ENCODE measurements at regions of chr18 and their contacts with region 1.

Region 1: DNA sequence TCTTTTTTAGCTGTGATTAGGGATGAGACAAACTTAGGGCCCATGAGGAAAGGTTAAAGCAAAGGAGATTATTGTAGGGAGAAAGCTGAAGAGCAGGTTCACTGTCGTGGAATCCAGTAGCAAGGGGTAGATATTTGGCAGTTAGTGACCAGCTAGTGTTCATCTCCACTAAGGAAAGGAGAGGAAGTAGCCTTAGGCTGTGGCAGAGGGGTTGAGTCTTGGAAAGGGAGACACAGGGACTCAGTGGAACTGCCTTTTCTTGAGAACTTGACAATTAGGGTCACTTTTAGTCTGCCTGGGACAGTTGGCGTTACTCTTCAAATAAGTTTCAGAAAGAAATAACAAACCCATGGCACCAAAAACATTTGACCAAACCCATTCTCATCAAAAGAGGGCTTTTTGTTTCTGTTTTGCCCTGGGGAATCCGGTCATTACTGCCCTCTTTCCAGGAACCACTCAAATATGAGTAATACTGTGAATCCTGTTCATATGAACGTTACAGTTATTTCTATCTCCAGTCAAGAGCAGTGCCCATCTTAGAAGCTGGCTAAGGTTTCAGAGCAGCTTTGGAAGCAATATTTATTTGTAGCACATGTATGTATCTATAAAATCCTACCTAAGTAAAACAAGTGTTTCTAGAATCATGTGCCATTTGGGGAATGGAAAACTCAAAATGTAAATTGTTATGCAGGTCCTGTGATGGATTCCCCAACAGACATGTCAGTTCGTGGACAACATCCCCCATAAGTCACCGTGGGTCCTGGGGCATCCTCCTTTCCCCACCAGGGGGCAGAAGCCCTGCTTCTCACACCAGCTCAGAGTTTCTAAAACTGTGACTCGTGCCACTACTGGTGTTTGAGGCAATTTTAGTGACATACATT is 77.3 kb upstream of the PHLPP1 start:
- DNase-seq: peak; percentile 60
- ATAC-seq: peak; percentile 53
- H3K4me3 ChIP-seq: no peak overlapping the region
- H3K4me3 Mint-ChIP-seq: no peak overlapping the region
- H3K27ac ChIP-seq: no peak overlapping the region
- H3K27ac Mint-ChIP-seq: no peak overlapping the region
- H3K4me1 ChIP-seq: no peaks in the 10 kb centered on the region
- H3K4me1 Mint-ChIP-seq: no peaks in the 10 kb centered on the region
- H3K27me3 ChIP-seq: no peaks in the 10 kb centered on the region
- H3K27me3 Mint-ChIP-seq: peaks cover 15% of the 10 kb centered on the region
- CTCF ChIP-seq: peak; percentile 70

Region 2: DNA sequence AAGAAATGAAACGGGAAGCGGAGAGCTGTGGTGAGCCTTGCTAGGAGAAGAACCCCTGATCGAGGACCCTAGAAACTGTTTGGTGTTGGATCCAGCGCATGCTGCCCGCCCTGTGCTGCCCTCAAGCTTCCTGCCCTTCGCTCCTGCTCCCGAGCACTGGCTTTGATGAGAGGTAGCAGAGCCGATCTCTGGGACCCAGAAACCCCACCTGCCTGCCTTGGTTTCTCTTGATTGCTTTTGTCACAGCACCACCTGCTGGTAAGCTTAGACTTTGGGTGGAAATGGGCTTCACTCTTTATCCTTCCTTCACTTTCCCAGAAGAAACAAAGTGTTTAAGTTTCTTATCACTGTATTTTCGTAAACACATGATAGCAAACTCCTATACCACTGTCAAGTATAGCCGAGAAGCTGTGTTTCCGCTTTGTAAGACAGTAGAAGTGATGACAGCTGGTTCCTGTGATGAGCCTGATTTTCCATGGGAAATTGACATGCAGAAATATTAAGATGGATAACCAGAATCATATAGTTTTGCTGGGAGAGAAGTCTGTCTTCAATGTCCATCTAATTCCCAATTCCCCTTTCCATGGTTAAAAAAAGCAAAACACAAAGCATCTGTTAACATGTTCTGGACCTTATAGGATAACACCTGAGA is 344.7 kb after region 1 on chr18:
- CTCF ChIA-PET with region 1: interaction called, 59 read pairs
- POLR2A ChIA-PET with region 1: no interaction called
- intact Hi-C with region 1: loop called (anchors 1 kb)
- DNase-seq: peak; percentile 71
- ATAC-seq: peak; percentile 56
- H3K4me3 ChIP-seq: peak overlapping the region in 3 of 5 experiments; percentile 13 to 16 (median 15)
- H3K4me3 Mint-ChIP-seq: no peak overlapping the region
- H3K27ac ChIP-seq: no peak overlapping the region
- H3K27ac Mint-ChIP-seq: no peak overlapping the region
- H3K4me1 ChIP-seq: peaks cover 3 to 5% of the 10 kb centered on the region in 2 donors
- H3K4me1 Mint-ChIP-seq: peaks cover 6% of the 10 kb centered on the region
- H3K27me3 ChIP-seq: no peaks in the 10 kb centered on the region
- H3K27me3 Mint-ChIP-seq: no peaks in the 10 kb centered on the region
- CTCF ChIP-seq: peak; percentile 80

Measured in B cell (primary cell).